ENCODE measurements at regions of chr21 and their contacts with region 1.

Region 1: GRCh38 chr21:38306433-38307141 is 49.8 kb downstream of the KCNJ15 start:
- DNase-seq: no peak
- H3K4me3 Mint-ChIP-seq: no peak overlapping the region
- H3K27ac Mint-ChIP-seq: no peak overlapping the region
- H3K4me1 Mint-ChIP-seq: peaks cover 23% of the 10 kb centered on the region
- H3K27me3 Mint-ChIP-seq: no peaks in the 10 kb centered on the region

Region 2: DNA sequence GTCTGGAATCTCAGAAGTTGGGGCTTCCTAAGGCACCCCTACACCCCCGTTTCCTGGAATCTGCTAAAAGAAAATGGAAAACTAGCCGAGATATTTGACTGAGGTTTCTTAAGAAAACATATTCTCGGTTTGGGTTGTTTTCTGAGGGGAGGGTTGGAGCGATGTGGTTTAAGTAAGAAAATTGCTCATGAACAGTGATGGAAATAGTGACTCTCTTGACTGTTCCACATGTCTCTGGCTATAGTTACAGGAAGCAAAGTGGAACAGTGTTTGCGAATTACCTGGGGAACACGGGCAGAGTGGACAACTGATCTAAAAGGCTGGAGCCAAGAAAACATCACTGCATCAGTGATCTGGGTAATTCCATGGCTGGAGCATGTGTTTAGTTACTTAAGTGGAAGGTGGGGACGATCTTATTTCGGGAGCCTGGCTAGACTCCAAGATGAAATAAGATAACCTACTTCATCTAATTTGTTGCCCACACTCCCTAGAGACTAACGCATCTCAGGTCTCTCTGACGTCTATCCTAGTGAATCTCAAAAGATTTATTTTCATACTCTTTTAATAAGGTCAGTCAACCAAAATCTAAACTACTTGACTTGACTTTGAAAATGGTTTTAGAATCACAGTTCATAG is 42.6 kb after region 1 on chr21:
- CTCF ChIA-PET with region 1: interaction called, 15 read pairs
- intact Hi-C with region 1: loop called (anchors 2 kb)
- DNase-seq: peak; percentile 44
- H3K4me3 Mint-ChIP-seq: no peak overlapping the region
- H3K27ac Mint-ChIP-seq: peak overlapping the region; percentile 77
- H3K4me1 Mint-ChIP-seq: peaks cover 44% of the 10 kb centered on the region
- H3K27me3 Mint-ChIP-seq: no peaks in the 10 kb centered on the region